MCF 10A (cell line): ENCODE measurements at regions of chr1 and their contacts with region 1.

Region 1: GRCh38 chr1:176374967-176375569 is 87.9 kb upstream of the PAPPA2 start:
- DNase-seq: peak; percentile 90
- H3K4me3 Mint-ChIP-seq: no peak overlapping the region
- H3K27ac Mint-ChIP-seq: no peak overlapping the region
- H3K4me1 Mint-ChIP-seq: no peaks in the 10 kb centered on the region
- H3K27me3 Mint-ChIP-seq: no peaks in the 10 kb centered on the region
- CTCF ChIP-seq: peak; percentile 93

Region 2: GRCh38 chr1:176119549-176119948 is 255.5 kb before region 1 on chr1:
- CTCF ChIA-PET with region 1: interaction called, 3 read pairs
- POLR2A ChIA-PET with region 1: no interaction called
- intact Hi-C with region 1: loop called (anchors 5 kb)
- DNase-seq: peak; percentile 47
- H3K4me3 Mint-ChIP-seq: no peak overlapping the region
- H3K27ac Mint-ChIP-seq: no peak overlapping the region
- H3K4me1 Mint-ChIP-seq: peaks cover 6% of the 10 kb centered on the region
- H3K27me3 Mint-ChIP-seq: no peaks in the 10 kb centered on the region
- CTCF ChIP-seq: peak; percentile 36

Region 3: DNA sequence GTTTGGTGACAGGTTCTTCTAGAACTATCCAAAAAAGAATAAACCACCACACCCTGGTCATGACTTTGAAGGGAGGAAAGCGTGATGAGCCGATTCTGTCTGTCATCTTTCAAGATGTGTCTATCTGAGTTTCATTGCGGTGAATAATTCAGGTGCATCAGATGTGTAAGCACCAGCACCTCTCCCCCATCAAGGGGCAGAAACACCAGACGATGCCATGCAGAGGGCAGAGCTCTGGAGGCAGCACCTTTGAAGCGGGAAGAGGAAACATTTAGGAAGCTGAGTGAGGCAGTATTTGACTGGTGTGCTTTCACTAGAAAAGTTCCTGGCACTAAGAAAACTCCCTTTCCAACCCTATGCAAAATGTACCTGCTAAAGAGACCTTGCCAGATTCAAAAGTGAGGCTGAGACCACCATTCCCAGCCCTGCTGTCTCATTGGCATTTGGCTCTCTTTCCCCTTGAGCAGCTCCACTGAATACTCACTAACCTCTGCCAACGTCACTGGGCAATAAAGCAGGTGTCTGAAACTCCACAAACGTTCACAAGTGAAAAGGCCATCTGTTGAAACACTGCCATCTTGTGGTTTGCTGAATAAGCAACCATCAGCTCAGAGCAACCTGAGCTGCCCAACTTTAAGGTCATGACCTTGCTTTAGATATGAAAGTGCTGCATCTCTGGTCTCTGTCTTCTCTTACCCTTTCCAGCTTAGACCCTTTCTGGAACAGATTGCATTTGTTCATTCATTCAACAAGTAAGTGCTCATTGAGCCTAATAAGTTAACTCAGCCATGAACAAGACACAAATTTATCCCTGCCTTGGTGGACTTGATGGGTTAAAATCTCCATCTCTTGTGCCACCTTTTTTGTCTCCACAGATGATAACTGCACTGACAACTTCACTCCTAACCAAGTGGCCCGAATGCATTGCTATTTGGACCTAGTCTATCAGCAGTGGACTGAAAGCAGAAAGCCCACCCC is 316.5 kb after region 1 on chr1:
- CTCF ChIA-PET with region 1: interaction called, 228 read pairs
- POLR2A ChIA-PET with region 1: no interaction called
- intact Hi-C with region 1: loop called (anchors 1 kb)
- DNase-seq: peak; percentile 81
- H3K4me3 Mint-ChIP-seq: no peak overlapping the region
- H3K27ac Mint-ChIP-seq: no peak overlapping the region
- H3K4me1 Mint-ChIP-seq: peaks cover 7% of the 10 kb centered on the region
- H3K27me3 Mint-ChIP-seq: no peaks in the 10 kb centered on the region
- CTCF ChIP-seq: peak; percentile 89

Region 4: DNA sequence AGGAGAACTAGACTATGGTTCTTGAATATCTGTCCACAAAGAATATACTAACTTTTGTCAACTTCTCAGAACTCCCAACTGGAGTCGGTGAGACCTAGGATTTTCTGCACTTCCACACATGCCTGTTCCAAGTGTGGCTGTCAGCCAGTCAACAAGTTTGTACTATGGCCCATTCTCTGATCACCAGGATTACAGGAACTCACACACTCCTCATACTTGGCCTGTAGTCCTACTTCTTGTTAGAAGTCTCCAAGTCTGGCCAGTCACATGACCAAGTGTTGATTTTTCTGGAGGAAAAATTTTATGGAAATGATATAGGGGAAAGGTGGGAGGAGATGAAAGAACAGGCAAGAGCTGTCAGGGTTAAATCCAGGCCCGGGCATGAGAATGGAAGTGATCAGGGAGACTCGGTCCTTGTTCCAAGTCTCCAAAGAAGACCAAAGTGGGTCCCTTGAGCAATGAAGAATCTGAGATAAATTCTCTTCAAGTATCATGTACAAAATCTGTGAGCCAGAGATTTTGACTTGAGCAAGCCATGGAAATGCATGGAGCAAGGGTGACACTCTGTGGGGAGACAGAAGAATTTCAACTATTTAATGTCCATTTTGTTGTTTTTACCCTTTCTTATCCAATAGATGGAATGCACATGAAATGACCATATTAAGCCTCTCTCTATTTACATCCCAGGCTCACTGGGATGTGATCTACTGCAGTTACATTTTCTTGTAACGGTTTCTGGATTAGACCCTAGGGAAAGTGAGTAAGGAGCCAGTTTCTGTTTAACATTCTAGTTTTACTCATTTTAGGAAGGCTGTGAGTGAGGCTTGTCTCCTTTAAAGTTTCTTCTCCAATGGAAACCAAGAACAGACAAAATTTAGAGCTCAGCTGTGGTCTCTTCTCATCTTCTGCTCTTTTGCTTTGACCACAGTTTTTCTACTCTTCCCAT is 468.6 kb after region 1 on chr1:
- CTCF ChIA-PET with region 1: interaction called, 45 read pairs
- POLR2A ChIA-PET with region 1: interaction called, 3 read pairs
- intact Hi-C with region 1: loop called (anchors 1 kb)
- DNase-seq: peak; percentile 53
- H3K4me3 Mint-ChIP-seq: no peak overlapping the region
- H3K27ac Mint-ChIP-seq: no peak overlapping the region
- H3K4me1 Mint-ChIP-seq: no peaks in the 10 kb centered on the region
- H3K27me3 Mint-ChIP-seq: no peaks in the 10 kb centered on the region
- CTCF ChIP-seq: peak; percentile 84

Region 5: GRCh38 chr1:176850871-176851270 is 475.8 kb after region 1 on chr1:
- CTCF ChIA-PET with region 1: interaction called, 13 read pairs
- POLR2A ChIA-PET with region 1: interaction called, 3 read pairs
- intact Hi-C with region 1: no loop called
- DNase-seq: no peak
- H3K4me3 Mint-ChIP-seq: no peak overlapping the region
- H3K27ac Mint-ChIP-seq: no peak overlapping the region
- H3K4me1 Mint-ChIP-seq: no peaks in the 10 kb centered on the region
- H3K27me3 Mint-ChIP-seq: no peaks in the 10 kb centered on the region
- CTCF ChIP-seq: no peak

Region 6: GRCh38 chr1:177170756-177171535 is 795.9 kb after region 1 on chr1 and contains the start of gene BRINP2:
- CTCF ChIA-PET with region 1: no interaction called
- POLR2A ChIA-PET with region 1: no interaction called
- intact Hi-C with region 1: no loop called
- DNase-seq: peak; percentile 43
- H3K4me3 Mint-ChIP-seq: no peak within 1 kb of the TSS
- H3K27ac Mint-ChIP-seq: no peak within 1 kb of the TSS
- H3K4me1 Mint-ChIP-seq: no peaks in the 10 kb centered on the region
- H3K27me3 Mint-ChIP-seq: peaks cover 30% of the 10 kb centered on the region
- CTCF ChIP-seq: no peak
- total RNA-seq, gene BRINP2: not detected in 2 replicates